Activated CD4-positive, alpha-beta memory T cell treated with anti-CD3 and anti-CD28 coated beads for 36 hours (primary cell): ENCODE measurements at regions of chr12 and their contacts with region 1.

Region 1: DNA sequence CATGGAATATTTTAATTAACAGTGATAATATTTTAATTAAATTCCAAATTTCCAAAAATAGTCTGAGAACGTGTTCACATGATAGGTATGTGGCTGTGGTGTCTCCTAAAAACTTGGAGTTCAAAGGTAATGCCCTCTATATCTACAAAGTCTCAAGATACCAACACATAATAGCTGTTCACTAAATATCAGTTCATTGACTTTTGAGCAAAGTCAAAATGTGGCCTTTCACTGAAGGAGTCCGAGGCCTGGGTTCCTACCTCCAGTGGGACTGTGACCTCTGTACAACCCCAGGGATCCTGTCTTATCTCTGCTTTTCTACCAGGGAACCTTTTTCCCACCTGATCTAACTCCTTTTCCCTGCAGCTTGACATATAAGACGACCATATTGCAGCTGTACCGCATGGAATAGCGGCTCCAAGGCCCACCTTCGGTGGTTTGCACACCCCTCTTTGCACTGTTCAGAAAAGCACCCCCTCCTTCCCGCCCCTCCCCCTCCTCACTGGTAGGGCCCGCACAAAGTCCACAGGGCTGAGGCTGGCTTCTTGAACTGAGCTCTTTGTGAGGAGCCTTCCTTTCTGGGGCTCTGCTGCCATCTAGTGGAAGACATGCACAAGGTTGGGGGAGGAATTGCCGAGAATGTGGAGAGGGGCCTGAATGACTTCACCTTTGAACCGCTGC is 3.1 kb downstream of the CCND2 start:
- DNase-seq: peak; percentile 92
- H3K4me3 Mint-ChIP-seq: peak overlapping the region; percentile 97
- H3K27ac Mint-ChIP-seq: peak overlapping the region; percentile 99
- H3K4me1 Mint-ChIP-seq: peaks cover 58% of the 10 kb centered on the region
- H3K27me3 Mint-ChIP-seq: no peaks in the 10 kb centered on the region

Region 2: DNA sequence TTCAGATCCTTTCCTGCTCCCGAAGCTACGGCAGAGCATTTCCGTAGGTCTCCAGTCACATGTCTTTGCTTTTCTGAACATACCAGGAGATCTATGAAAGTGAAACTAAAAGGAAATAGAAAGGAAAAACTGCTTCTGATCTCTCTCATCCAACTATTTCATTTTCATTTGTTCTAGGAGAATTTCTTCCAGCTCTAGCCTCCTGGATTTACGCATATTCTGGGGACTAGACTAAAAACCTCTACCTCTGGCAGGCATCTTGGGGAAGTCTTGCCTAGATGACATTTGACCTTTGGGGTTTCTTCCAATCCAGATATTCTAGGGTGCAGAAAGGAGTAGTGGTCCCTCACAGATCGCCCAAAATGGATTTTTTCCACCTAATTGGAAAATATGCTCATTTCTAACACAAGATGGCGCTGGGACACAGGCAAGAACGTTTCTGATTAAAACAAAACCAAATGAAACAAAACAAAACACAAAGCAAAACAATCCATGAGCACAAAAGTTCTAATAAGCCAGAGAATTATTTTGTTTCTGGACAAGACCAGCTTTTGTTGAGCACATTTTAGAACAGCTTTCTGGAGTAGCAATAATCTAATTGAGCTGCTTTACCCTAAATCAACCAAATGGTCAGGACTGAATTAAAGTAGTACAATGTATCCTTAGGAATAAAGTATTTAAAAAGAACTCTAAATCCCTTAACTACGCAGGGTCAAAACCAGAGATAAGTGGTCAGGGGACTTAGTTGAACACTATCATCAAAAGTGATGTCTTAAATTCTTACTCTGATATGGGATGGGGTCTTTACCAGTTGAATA is 391.2 kb before region 1 on chr12:
- CTCF ChIA-PET with region 1: interaction called, 130 read pairs
- POLR2A ChIA-PET with region 1: interaction called, 3 read pairs
- intact Hi-C with region 1: loop called (anchors 1 kb)
- DNase-seq: peak; percentile 45
- H3K4me3 Mint-ChIP-seq: peak overlapping the region; percentile 42
- H3K27ac Mint-ChIP-seq: peak overlapping the region; percentile 34
- H3K4me1 Mint-ChIP-seq: peaks cover 7% of the 10 kb centered on the region
- H3K27me3 Mint-ChIP-seq: peaks cover 6% of the 10 kb centered on the region

Region 3: GRCh38 chr12:3998968-3999826 is 277.5 kb before region 1 on chr12:
- CTCF ChIA-PET with region 1: interaction called, 153 read pairs
- POLR2A ChIA-PET with region 1: interaction called, 4 read pairs
- intact Hi-C with region 1: loop called (anchors 1 kb)
- DNase-seq: no peak
- H3K4me3 Mint-ChIP-seq: no peak overlapping the region
- H3K27ac Mint-ChIP-seq: no peak overlapping the region
- H3K4me1 Mint-ChIP-seq: peaks cover 3% of the 10 kb centered on the region
- H3K27me3 Mint-ChIP-seq: no peaks in the 10 kb centered on the region

Region 4: GRCh38 chr12:4056910-4057845 is 219.5 kb before region 1 on chr12:
- CTCF ChIA-PET with region 1: interaction called, 10 read pairs
- POLR2A ChIA-PET with region 1: no interaction called
- intact Hi-C with region 1: loop called (anchors 5 kb)
- DNase-seq: no peak
- H3K4me3 Mint-ChIP-seq: peak overlapping the region; percentile 43
- H3K27ac Mint-ChIP-seq: peak overlapping the region; percentile 69
- H3K4me1 Mint-ChIP-seq: peaks cover 39% of the 10 kb centered on the region
- H3K27me3 Mint-ChIP-seq: no peaks in the 10 kb centered on the region

Region 5: GRCh38 chr12:4112734-4113325 is 163.8 kb before region 1 on chr12:
- CTCF ChIA-PET with region 1: interaction called, 92 read pairs
- POLR2A ChIA-PET with region 1: interaction called, 18 read pairs
- intact Hi-C with region 1: loop called (anchors 1 kb)
- DNase-seq: no peak
- H3K4me3 Mint-ChIP-seq: no peak overlapping the region
- H3K27ac Mint-ChIP-seq: peak overlapping the region; percentile 64
- H3K4me1 Mint-ChIP-seq: peaks cover 62% of the 10 kb centered on the region
- H3K27me3 Mint-ChIP-seq: peaks cover 15% of the 10 kb centered on the region

Region 6: GRCh38 chr12:4178424-4179170 is 98.1 kb before region 1 on chr12:
- CTCF ChIA-PET with region 1: interaction called, 20 read pairs
- POLR2A ChIA-PET with region 1: interaction called, 4 read pairs
- intact Hi-C with region 1: loop called (anchors 1 kb)
- DNase-seq: peak; percentile 39
- H3K4me3 Mint-ChIP-seq: peak overlapping the region; percentile 27
- H3K27ac Mint-ChIP-seq: peak overlapping the region; percentile 76
- H3K4me1 Mint-ChIP-seq: peaks cover 20% of the 10 kb centered on the region
- H3K27me3 Mint-ChIP-seq: peaks cover 2% of the 10 kb centered on the region

Region 7: GRCh38 chr12:4287325-4288211 is 10.9 kb after region 1 on chr12:
- CTCF ChIA-PET with region 1: interaction called, 21 read pairs
- POLR2A ChIA-PET with region 1: interaction called, 27 read pairs
- intact Hi-C with region 1: no loop called
- DNase-seq: no peak
- H3K4me3 Mint-ChIP-seq: no peak overlapping the region
- H3K27ac Mint-ChIP-seq: peak overlapping the region; percentile 71
- H3K4me1 Mint-ChIP-seq: peaks cover 95% of the 10 kb centered on the region
- H3K27me3 Mint-ChIP-seq: no peaks in the 10 kb centered on the region

Region 8: GRCh38 chr12:4311776-4312175 is 35.1 kb after region 1 on chr12:
- CTCF ChIA-PET with region 1: no interaction called
- POLR2A ChIA-PET with region 1: no interaction called
- intact Hi-C with region 1: no loop called
- DNase-seq: no peak
- H3K4me3 Mint-ChIP-seq: no peak overlapping the region
- H3K27ac Mint-ChIP-seq: no peak overlapping the region
- H3K4me1 Mint-ChIP-seq: peaks cover 2% of the 10 kb centered on the region
- H3K27me3 Mint-ChIP-seq: no peaks in the 10 kb centered on the region